MCF 10A (cell line): ENCODE measurements at regions of chr6 and their contacts with region 1.

Region 1: GRCh38 chr6:116087437-116088027 is 13.1 kb upstream of the NT5DC1 start:
- DNase-seq: peak; percentile 64
- H3K4me3 Mint-ChIP-seq: no peak overlapping the region
- H3K27ac Mint-ChIP-seq: peak overlapping the region; percentile 16
- H3K4me1 Mint-ChIP-seq: peaks cover 14% of the 10 kb centered on the region
- H3K27me3 Mint-ChIP-seq: no peaks in the 10 kb centered on the region
- CTCF ChIP-seq: no peak

Region 2: GRCh38 chr6:114862819-114863218 is 1224.7 kb before region 1 on chr6:
- CTCF ChIA-PET with region 1: no interaction called
- POLR2A ChIA-PET with region 1: no interaction called
- intact Hi-C with region 1: no loop called
- DNase-seq: peak; percentile 4
- H3K4me3 Mint-ChIP-seq: no peak overlapping the region
- H3K27ac Mint-ChIP-seq: no peak overlapping the region
- H3K4me1 Mint-ChIP-seq: no peaks in the 10 kb centered on the region
- H3K27me3 Mint-ChIP-seq: peaks cover 11% of the 10 kb centered on the region
- CTCF ChIP-seq: no peak

Region 3: GRCh38 chr6:116027801-116028200 is 59.7 kb before region 1 on chr6:
- CTCF ChIA-PET with region 1: no interaction called
- POLR2A ChIA-PET with region 1: no interaction called
- intact Hi-C with region 1: no loop called
- DNase-seq: no peak
- H3K4me3 Mint-ChIP-seq: no peak overlapping the region
- H3K27ac Mint-ChIP-seq: no peak overlapping the region
- H3K4me1 Mint-ChIP-seq: peaks cover 27% of the 10 kb centered on the region
- H3K27me3 Mint-ChIP-seq: no peaks in the 10 kb centered on the region
- CTCF ChIP-seq: no peak

Region 4: DNA sequence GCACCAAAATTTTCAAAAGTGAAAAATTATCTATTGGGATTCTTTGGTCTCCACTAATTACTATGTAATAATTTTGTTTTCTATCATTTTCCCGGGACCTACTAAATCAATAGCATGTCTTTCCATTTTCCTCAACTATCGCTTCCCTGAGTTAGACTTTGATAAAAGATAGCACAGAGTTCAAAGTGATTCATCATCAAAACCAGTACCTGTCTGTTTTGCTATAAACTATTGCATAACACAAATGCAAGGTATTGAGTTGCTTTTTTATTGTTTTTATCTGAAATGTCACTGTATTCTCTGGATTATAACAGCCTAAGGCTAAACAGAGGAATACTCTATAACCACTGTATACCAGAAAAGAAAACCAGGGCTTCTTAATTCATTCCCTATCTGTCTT is 46.6 kb before region 1 on chr6:
- CTCF ChIA-PET with region 1: no interaction called
- POLR2A ChIA-PET with region 1: no interaction called
- intact Hi-C with region 1: no loop called
- DNase-seq: no peak
- H3K4me3 Mint-ChIP-seq: no peak overlapping the region
- H3K27ac Mint-ChIP-seq: no peak overlapping the region
- H3K4me1 Mint-ChIP-seq: no peaks in the 10 kb centered on the region
- H3K27me3 Mint-ChIP-seq: no peaks in the 10 kb centered on the region
- CTCF ChIP-seq: no peak

Region 5: GRCh38 chr6:116073765-116074419 is 13.6 kb before region 1 on chr6:
- CTCF ChIA-PET with region 1: interaction called, 10 read pairs
- POLR2A ChIA-PET with region 1: interaction called, 10 read pairs
- intact Hi-C with region 1: no loop called
- DNase-seq: peak; percentile 76
- H3K4me3 Mint-ChIP-seq: no peak overlapping the region
- H3K27ac Mint-ChIP-seq: peak overlapping the region; percentile 63
- H3K4me1 Mint-ChIP-seq: peaks cover 16% of the 10 kb centered on the region
- H3K27me3 Mint-ChIP-seq: no peaks in the 10 kb centered on the region
- CTCF ChIP-seq: no peak